Activated T-helper 2 cell treated with anti-CD3 and anti-CD28 coated beads, Interferon-gamma antibody, Interleukin-2, Interleukin-4, amounts not matched to agents 10 μg/mL and 5 μg/mL and 100 μg/mL, durations not matched to agents 14 hours and 24 hours and 36 hours (primary cell): ENCODE measurements at regions of chr10 and their contacts with region 1.

Region 1: GRCh38 chr10:102151774-102152544 is at the start of gene NOLC1:
- DNase-seq: peak; percentile 100
- H3K4me3 Mint-ChIP-seq: peak within 1 kb of the TSS; percentile 97
- H3K27ac Mint-ChIP-seq: peak within 1 kb of the TSS; percentile 96
- H3K4me1 Mint-ChIP-seq: peaks cover 28% of the 10 kb centered on the region
- H3K27me3 Mint-ChIP-seq: no peaks in the 10 kb centered on the region
- total RNA-seq, gene NOLC1: 195 and 196 TPM in 2 replicates

Region 2: GRCh38 chr10:102055647-102056419 is 96.1 kb before region 1 on chr10 and contains the start of gene ARMH3:
- intact Hi-C with region 1: loop called (anchors 1 kb)
- DNase-seq: peak; percentile 90
- H3K4me3 Mint-ChIP-seq: peak within 1 kb of the TSS; percentile 94
- H3K27ac Mint-ChIP-seq: peak within 1 kb of the TSS; percentile 92
- H3K4me1 Mint-ChIP-seq: peaks cover 16% of the 10 kb centered on the region
- H3K27me3 Mint-ChIP-seq: no peaks in the 10 kb centered on the region
- total RNA-seq, gene ARMH3: 19.1 and 25.5 TPM in 2 replicates

Region 3: DNA sequence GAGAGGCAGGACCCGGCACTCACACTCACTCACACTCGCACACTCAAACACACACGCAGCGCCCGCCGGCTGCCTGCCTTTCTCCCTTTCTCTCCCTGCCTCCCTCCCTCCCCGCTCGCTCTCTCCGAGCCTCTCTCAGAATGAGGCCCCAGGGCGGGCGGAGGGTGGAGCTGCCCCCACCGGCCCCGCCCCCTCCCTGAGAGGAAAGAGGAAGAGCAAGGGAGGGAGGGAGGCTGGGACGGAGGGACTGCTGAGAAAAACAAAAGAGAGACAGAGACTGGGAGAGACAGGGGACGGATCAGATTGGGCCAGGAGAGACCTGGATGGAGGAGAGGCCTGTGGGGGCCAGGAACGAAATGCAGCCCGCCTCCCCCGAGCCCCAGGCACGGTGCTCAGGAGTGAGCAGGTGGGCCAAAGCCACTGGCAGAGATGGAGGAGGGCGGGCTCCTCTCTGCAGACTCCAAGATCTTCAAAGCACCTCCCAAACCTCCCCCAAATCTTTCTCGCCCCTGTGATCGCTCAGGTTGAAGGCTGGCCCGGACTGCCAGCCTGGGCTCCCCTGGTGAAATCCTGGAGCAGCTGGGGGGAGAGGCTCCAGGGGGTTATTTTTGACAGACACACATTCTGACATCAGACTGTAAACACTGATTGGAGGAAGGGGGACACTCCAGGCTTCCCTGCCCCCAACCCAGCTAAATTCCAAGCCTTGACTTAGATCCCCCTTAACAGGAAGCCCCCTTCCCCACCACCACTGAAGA is 36.9 kb before region 1 on chr10:
- intact Hi-C with region 1: loop called (anchors 1 kb)
- DNase-seq: peak; percentile 74
- H3K4me3 Mint-ChIP-seq: peak overlapping the region; percentile 84
- H3K27ac Mint-ChIP-seq: peak overlapping the region; percentile 92
- H3K4me1 Mint-ChIP-seq: peaks cover 59% of the 10 kb centered on the region
- H3K27me3 Mint-ChIP-seq: no peaks in the 10 kb centered on the region

Region 4: GRCh38 chr10:102132563-102133372 is 19.2 kb before region 1 on chr10 and contains the start of gene PPRC1:
- intact Hi-C with region 1: loop called (anchors 1 kb)
- DNase-seq: peak; percentile 98
- H3K4me3 Mint-ChIP-seq: peak within 1 kb of the TSS; percentile 95
- H3K27ac Mint-ChIP-seq: peak within 1 kb of the TSS; percentile 98
- H3K4me1 Mint-ChIP-seq: peaks cover 26% of the 10 kb centered on the region
- H3K27me3 Mint-ChIP-seq: no peaks in the 10 kb centered on the region
- total RNA-seq, gene PPRC1: 91.3 and 94.1 TPM in 2 replicates

Region 5: GRCh38 chr10:102713814-102714620 is 562.1 kb after region 1 on chr10 and contains the start of gene ARL3:
- intact Hi-C with region 1: loop called (anchors 5 kb)
- DNase-seq: peak; percentile 96
- H3K4me3 Mint-ChIP-seq: peak within 1 kb of the TSS; percentile 92
- H3K27ac Mint-ChIP-seq: peak within 1 kb of the TSS; percentile 92
- H3K4me1 Mint-ChIP-seq: peaks cover 55% of the 10 kb centered on the region
- H3K27me3 Mint-ChIP-seq: no peaks in the 10 kb centered on the region
- total RNA-seq, gene ARL3: 11.1 and 12.2 TPM in 2 replicates